Heart right ventricle (tissue), 16 donors: ENCODE measurements at regions of chr2 and their contacts with region 1.

Region 1: GRCh38 chr2:82825410-82826090 is 1633.5 kb downstream of the SUCLG1 start:
- DNase-seq: no peak
- ATAC-seq: no peak
- H3K4me3 ChIP-seq: no peak overlapping the region
- H3K27ac ChIP-seq: no peak overlapping the region
- H3K4me1 ChIP-seq: no peaks in the 10 kb centered on the region
- H3K27me3 ChIP-seq: no peaks in the 10 kb centered on the region
- CTCF ChIP-seq: no peak

Region 2: GRCh38 chr2:80987466-80987865 is 1838.1 kb before region 1 on chr2:
- intact Hi-C with region 1: no loop called
- DNase-seq: no peak
- ATAC-seq: no peak
- H3K4me3 ChIP-seq: no peak overlapping the region
- H3K27ac ChIP-seq: no peak overlapping the region
- H3K4me1 ChIP-seq: no peaks in the 10 kb centered on the region
- H3K27me3 ChIP-seq: no peaks in the 10 kb centered on the region
- CTCF ChIP-seq: no peak

Region 3: GRCh38 chr2:82731824-82732223 is 93.7 kb before region 1 on chr2:
- intact Hi-C with region 1: no loop called
- DNase-seq: no peak
- ATAC-seq: no peak
- H3K4me3 ChIP-seq: no peak overlapping the region
- H3K27ac ChIP-seq: no peak overlapping the region
- H3K4me1 ChIP-seq: no peaks in the 10 kb centered on the region
- H3K27me3 ChIP-seq: no peaks in the 10 kb centered on the region
- CTCF ChIP-seq: no peak

Region 4: DNA sequence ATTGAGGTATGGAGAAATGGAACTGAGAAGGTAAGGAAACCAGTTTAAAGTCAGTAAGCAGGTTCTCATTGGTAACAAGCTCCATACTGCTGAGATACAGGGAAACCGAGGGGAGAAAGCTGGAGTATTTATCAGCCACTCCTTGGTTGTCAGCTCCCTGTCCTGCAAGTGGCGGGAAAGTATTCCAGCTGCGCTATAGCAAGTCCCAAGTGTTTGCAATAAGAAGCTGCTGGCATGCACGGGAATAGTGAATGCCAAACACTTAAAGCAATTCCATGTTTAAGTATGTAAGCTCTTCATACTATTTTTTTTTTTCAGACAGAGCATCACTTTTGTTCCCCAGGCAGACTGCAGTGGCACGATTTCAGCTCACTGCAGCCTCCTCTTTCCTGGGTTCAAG is 32.4 kb after region 1 on chr2:
- intact Hi-C with region 1: loop called in 1 of 10 experiments (anchors 2 kb)
- DNase-seq: no peak
- ATAC-seq: no peak
- H3K4me3 ChIP-seq: no peak overlapping the region
- H3K27ac ChIP-seq: no peak overlapping the region
- H3K4me1 ChIP-seq: no peaks in the 10 kb centered on the region
- H3K27me3 ChIP-seq: no peaks in the 10 kb centered on the region
- CTCF ChIP-seq: no peak